ENCODE measurements at regions of chr1 and their contacts with region 1.

Region 1: DNA sequence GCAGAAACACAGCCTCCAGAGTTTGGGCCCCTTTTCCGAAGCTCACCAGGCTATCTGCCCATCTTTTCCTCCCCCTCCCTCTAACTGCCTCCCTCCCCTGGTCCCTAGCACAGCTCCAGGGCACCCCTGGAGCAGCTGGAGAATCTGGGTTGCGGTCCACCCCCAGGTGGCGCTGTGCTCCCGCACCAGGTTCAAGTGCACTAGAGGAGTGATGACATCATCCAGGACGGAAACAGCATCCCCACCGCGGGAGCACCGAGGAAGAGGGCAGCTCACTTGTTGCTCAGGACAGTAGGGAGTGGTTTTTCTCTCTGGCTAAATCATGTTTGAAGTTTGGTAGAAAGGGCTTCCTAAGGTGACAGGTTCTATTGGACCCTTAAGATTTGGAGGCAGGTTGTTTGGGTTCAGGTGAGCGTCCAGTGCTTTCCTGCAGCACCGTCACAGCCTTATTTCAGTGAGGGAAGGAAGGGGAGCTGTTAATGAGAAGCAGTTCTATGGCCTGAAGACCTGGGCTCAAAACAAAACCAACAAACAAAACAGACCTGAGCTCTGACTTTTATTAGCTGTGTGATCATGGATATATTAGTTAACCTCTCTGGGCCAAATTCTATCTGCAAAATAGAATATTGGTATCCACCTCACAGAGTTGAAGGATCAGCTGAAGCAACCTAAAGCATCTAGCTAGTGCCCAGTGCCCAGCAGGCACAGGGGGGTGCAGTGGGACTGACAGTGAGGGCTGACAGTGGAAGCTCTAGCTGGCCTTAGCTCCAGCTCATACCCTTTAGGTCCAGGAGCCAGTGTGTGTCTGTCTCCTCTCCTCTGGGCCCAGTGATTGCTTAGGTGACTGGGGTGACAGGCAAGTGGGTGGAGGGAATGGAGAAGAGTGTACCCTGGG is 7.5 kb downstream of the SHISA4 start:
- DNase-seq: no peak
- H3K4me3 ChIP-seq: no peak overlapping the region
- H3K27me3 ChIP-seq: no peaks in the 10 kb centered on the region
- CTCF ChIP-seq: peak; percentile 97

Region 2: GRCh38 chr1:201916649-201917249 is 20.6 kb after region 1 on chr1:
- CTCF ChIA-PET with region 1: interaction called, 11 read pairs
- POLR2A ChIA-PET with region 1: no interaction called
- DNase-seq: no peak
- H3K4me3 ChIP-seq: no peak overlapping the region
- H3K27me3 ChIP-seq: no peaks in the 10 kb centered on the region
- CTCF ChIP-seq: no peak

Region 3: GRCh38 chr1:201946224-201946908 is 50.2 kb after region 1 on chr1 and contains the start of gene LMOD1:
- CTCF ChIA-PET with region 1: interaction called, 45 read pairs
- POLR2A ChIA-PET with region 1: interaction called, 3 read pairs
- DNase-seq: peak; percentile 86
- H3K4me3 ChIP-seq: peak within 1 kb of the TSS; percentile 49
- H3K27me3 ChIP-seq: no peaks in the 10 kb centered on the region
- CTCF ChIP-seq: 0 out of 2 replicates have a peak, but pooled peaks have one; percentile 11
- polyA plus RNA-seq, gene LMOD1: 67.8 and 112 TPM in 2 replicates

Region 4: GRCh38 chr1:201970334-201971159 is 74.4 kb after region 1 on chr1:
- CTCF ChIA-PET with region 1: interaction called, 201 read pairs
- POLR2A ChIA-PET with region 1: no interaction called
- DNase-seq: no peak
- H3K4me3 ChIP-seq: no peak overlapping the region
- H3K27me3 ChIP-seq: no peaks in the 10 kb centered on the region
- CTCF ChIP-seq: no peak

Region 5: GRCh38 chr1:201999625-202000238 is 103.6 kb after region 1 on chr1:
- CTCF ChIA-PET with region 1: interaction called, 20 read pairs
- POLR2A ChIA-PET with region 1: no interaction called
- DNase-seq: no peak
- H3K4me3 ChIP-seq: no peak overlapping the region
- H3K27me3 ChIP-seq: no peaks in the 10 kb centered on the region
- CTCF ChIP-seq: peak; percentile 76

Measured in BJ (cell line).